ENCODE measurements at regions of chr12 and their contacts with region 1.

Region 1: DNA sequence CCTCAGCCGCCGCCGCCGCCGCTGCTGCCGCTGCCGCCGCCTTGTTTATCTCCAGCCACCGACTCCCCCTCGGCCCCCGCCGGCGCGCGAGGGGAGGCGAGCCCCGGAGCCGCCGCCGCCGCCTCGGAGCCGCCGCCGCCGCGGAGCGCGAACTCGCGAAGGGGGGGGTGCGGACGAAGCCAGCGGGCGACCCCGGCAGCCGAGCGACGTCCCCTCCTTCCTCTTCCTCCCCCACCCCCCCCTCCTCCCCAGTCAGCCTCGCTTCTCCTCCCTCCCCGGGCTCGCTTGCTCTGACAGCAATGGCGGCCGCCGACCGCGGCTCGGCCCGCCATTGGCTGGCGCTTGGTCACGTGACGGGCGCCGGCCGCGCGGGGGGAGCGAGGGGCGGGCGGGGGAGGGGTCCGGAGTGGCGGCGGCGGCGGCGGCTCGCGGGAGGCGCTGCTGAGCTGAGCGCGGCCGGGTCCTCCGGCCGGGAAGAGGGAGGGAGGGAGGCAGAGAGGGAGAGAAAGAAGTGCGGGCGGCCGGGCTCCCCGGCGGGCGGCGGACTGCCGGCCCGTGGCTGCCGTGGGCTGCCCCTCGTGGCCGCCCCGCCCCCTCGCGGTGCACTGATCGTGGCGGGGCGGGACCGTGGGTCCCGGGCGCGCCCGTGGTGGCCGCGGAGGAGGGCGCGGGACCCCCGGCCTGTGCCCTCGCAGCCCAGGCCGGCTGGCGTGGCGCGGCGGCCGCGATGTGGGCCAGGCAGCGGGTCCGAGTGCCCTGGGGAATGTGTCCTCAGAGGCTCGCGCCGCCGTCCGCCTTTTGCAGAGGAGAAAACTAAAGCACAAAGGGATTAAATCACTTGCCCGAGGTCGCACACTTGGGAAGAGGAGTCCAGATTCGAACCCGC is at the start of gene MED13L:
- DNase-seq: peak; percentile 46 to 93
- H3K4me3 ChIP-seq: peak within 1 kb of the TSS; percentile 89 to 95
- H3K27ac ChIP-seq: peak within 1 kb of the TSS; percentile 87 to 95
- H3K4me1 ChIP-seq: peaks cover 4 to 17% of the 10 kb centered on the region in 2 donors
- H3K27me3 ChIP-seq: no peaks in the 10 kb centered on the region
- CTCF ChIP-seq: peak; percentile 17 to 55 (median 39)
- total RNA-seq, gene MED13L: 117 TPM

Region 2: GRCh38 chr12:116142936-116143898 is 134.4 kb before region 1 on chr12:
- intact Hi-C with region 1: loop called (anchors 2 kb)
- DNase-seq: no peak
- H3K4me3 ChIP-seq: peak overlapping the region in 1 of 2 donors; percentile 3
- H3K27ac ChIP-seq: peak overlapping the region; percentile 65
- H3K4me1 ChIP-seq: peaks cover 14 to 67% of the 10 kb centered on the region in 2 donors
- H3K27me3 ChIP-seq: no peaks in the 10 kb centered on the region
- CTCF ChIP-seq: no peak

Region 3: DNA sequence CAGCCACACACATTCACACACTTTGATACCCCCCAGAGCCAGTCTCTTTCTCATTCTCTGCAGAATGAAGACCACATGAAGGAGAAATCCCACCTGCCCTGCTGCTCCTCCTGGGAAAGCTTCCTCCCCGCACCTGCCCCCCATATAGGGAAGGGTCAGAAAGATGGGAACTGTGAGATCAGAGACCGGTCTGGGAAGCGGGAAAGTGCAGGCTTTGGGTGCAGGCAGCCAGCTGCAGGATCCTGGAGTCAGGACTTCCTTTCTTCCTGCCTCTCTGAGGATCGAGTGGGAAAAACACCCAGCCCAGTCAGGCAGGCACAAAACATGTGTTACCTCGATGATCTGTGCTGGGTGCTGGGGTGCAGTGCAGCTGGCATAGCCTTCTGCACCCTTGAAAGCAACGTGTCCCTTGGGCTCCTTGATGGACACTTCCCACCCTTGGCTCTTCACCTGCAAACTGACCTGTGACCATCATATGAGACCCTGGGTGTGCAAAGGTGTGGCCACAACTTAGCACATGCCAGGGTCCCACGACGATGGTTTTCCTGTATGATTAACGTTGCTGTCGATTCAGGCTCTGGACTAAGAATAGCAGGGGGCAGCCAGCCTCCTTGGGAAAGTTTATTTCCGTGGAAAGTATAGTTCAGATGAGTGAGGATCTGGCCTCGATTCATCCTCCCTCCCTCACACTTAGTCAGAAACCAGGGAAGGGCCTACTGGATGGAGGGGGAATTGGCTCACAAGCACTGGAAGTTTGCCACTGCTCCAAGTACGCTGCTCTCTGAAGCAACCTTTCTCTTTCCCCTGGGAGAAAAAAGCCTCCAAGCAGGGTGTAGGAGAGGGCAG is 105.3 kb after region 1 on chr12:
- intact Hi-C with region 1: loop called (anchors 5 kb)
- DNase-seq: peak; percentile 44 to 95
- H3K4me3 ChIP-seq: peak overlapping the region in 1 of 2 donors; percentile 24
- H3K27ac ChIP-seq: peak overlapping the region; percentile 73 to 81
- H3K4me1 ChIP-seq: peaks cover 12 to 32% of the 10 kb centered on the region in 2 donors
- H3K27me3 ChIP-seq: no peaks in the 10 kb centered on the region
- CTCF ChIP-seq: no peak

Region 4: GRCh38 chr12:116426391-116427136 is 148.9 kb after region 1 on chr12:
- intact Hi-C with region 1: loop called (anchors 1 kb)
- DNase-seq: peak; percentile 35 to 95
- H3K4me3 ChIP-seq: no peak overlapping the region
- H3K27ac ChIP-seq: peak overlapping the region in 1 of 2 donors; percentile 48
- H3K4me1 ChIP-seq: peaks cover 0 to 11% of the 10 kb centered on the region in 2 donors
- H3K27me3 ChIP-seq: no peaks in the 10 kb centered on the region
- CTCF ChIP-seq: peak; percentile 19 to 55 (median 40)

Region 5: GRCh38 chr12:116455540-116456329 is 178.1 kb after region 1 on chr12:
- intact Hi-C with region 1: loop called (anchors 2 kb)
- DNase-seq: peak; percentile 69 to 96
- H3K4me3 ChIP-seq: peak overlapping the region in 1 of 2 donors; percentile 27
- H3K27ac ChIP-seq: peak overlapping the region; percentile 91 to 97
- H3K4me1 ChIP-seq: peaks cover 10 to 16% of the 10 kb centered on the region in 2 donors
- H3K27me3 ChIP-seq: no peaks in the 10 kb centered on the region
- CTCF ChIP-seq: no peak

Region 6: DNA sequence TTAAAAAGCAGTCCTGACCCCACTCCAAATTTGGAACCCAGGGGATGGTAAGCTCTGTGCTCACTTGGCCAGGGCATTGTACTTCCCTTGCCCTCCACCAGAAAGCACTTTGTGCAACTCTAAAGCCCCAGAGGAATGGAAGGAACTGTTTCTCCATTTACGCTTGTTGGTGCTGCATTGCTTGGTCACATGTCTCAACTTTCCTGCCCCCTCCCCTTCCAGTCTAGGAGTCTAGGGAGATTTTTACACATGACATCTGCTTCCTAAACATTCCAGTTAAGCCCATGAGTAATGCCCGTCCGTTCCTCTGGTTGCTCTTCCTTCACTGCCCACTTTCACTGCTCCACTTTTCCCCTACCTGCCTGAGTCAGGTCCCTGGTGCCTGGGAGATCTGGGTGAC is 188.9 kb after region 1 on chr12:
- intact Hi-C with region 1: no loop called
- DNase-seq: no peak
- H3K4me3 ChIP-seq: no peak overlapping the region
- H3K27ac ChIP-seq: no peak overlapping the region
- H3K4me1 ChIP-seq: no peaks in the 10 kb centered on the region
- H3K27me3 ChIP-seq: no peaks in the 10 kb centered on the region
- CTCF ChIP-seq: no peak

Region 7: GRCh38 chr12:116599285-116600136 is 321.9 kb after region 1 on chr12:
- intact Hi-C with region 1: loop called (anchors 1 kb)
- DNase-seq: peak; percentile 24 to 92
- H3K4me3 ChIP-seq: peak overlapping the region; percentile 43 to 59
- H3K27ac ChIP-seq: peak overlapping the region; percentile 73 to 79
- H3K4me1 ChIP-seq: peaks cover 4 to 22% of the 10 kb centered on the region in 2 donors
- H3K27me3 ChIP-seq: no peaks in the 10 kb centered on the region
- CTCF ChIP-seq: peak; percentile 22 to 86 (median 74)

Measured in ascending aorta (tissue), 2 donors.